Calu3 (cell line): ENCODE measurements at regions of chr1 and their contacts with region 1.

Region 1: GRCh38 chr1:173202430-173203145 is 4.5 kb downstream of the TNFSF4 start:
- DNase-seq: peak; percentile 61
- H3K4me3 Mint-ChIP-seq: no peak overlapping the region
- H3K27ac Mint-ChIP-seq: no peak overlapping the region
- H3K4me1 Mint-ChIP-seq: peaks cover 19% of the 10 kb centered on the region
- H3K27me3 Mint-ChIP-seq: no peaks in the 10 kb centered on the region
- CTCF ChIP-seq: peak; percentile 72

Region 2: GRCh38 chr1:172895050-172895460 is 307.5 kb before region 1 on chr1:
- CTCF ChIA-PET with region 1: interaction called, 3 read pairs
- intact Hi-C with region 1: loop called (anchors 5 kb)
- DNase-seq: no peak
- H3K4me3 Mint-ChIP-seq: peak overlapping the region; percentile 11
- H3K27ac Mint-ChIP-seq: peak overlapping the region; percentile 12
- H3K4me1 Mint-ChIP-seq: peaks cover 58% of the 10 kb centered on the region
- H3K27me3 Mint-ChIP-seq: no peaks in the 10 kb centered on the region
- CTCF ChIP-seq: no peak

Region 3: DNA sequence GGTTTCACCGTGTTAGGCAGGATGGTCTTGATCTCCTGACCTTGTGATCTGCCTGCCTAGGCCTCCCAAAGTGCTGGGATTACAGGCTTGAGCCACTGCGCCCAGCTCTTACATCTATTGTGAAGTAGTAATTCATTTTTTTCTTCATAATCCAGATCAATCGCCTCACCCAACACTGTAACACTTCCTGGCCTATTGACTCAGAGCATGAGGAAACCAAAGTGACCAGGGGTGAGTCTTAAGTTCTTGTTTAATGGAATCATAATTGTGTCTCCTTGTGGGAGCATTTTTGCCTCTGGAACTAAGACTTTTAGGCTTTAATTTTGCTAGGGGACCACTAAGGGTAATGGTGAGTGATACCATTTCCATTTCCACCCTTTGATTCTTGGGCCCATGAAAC is 179.2 kb before region 1 on chr1:
- CTCF ChIA-PET with region 1: no interaction called
- intact Hi-C with region 1: no loop called
- DNase-seq: no peak
- H3K4me3 Mint-ChIP-seq: no peak overlapping the region
- H3K27ac Mint-ChIP-seq: no peak overlapping the region
- H3K4me1 Mint-ChIP-seq: no peaks in the 10 kb centered on the region
- H3K27me3 Mint-ChIP-seq: no peaks in the 10 kb centered on the region
- CTCF ChIP-seq: no peak

Region 4: GRCh38 chr1:173149887-173150286 is 52.7 kb before region 1 on chr1:
- CTCF ChIA-PET with region 1: no interaction called
- intact Hi-C with region 1: no loop called
- DNase-seq: no peak
- H3K4me3 Mint-ChIP-seq: no peak overlapping the region
- H3K27ac Mint-ChIP-seq: no peak overlapping the region
- H3K4me1 Mint-ChIP-seq: no peaks in the 10 kb centered on the region
- H3K27me3 Mint-ChIP-seq: peaks cover 13% of the 10 kb centered on the region
- CTCF ChIP-seq: no peak